ENCODE measurements at regions of chr6 and their contacts with region 1.

Region 1: GRCh38 chr6:143734641-143735063 is 56.9 kb downstream of the PHACTR2 start:
- DNase-seq: no peak
- H3K4me3 Mint-ChIP-seq: no peak overlapping the region
- H3K27ac Mint-ChIP-seq: no peak overlapping the region
- H3K4me1 Mint-ChIP-seq: peaks cover 33% of the 10 kb centered on the region
- H3K27me3 Mint-ChIP-seq: no peaks in the 10 kb centered on the region

Region 2: GRCh38 chr6:143615785-143616184 is 118.9 kb before region 1 on chr6:
- intact Hi-C with region 1: loop called (anchors 5 kb)
- DNase-seq: no peak
- H3K4me3 Mint-ChIP-seq: no peak overlapping the region
- H3K27ac Mint-ChIP-seq: no peak overlapping the region
- H3K4me1 Mint-ChIP-seq: peaks cover 33% of the 10 kb centered on the region
- H3K27me3 Mint-ChIP-seq: peaks cover 7% of the 10 kb centered on the region

Region 3: GRCh38 chr6:143652841-143653331 is 81.8 kb before region 1 on chr6:
- intact Hi-C with region 1: no loop called
- DNase-seq: no peak
- H3K4me3 Mint-ChIP-seq: no peak overlapping the region
- H3K27ac Mint-ChIP-seq: no peak overlapping the region
- H3K4me1 Mint-ChIP-seq: peaks cover 5% of the 10 kb centered on the region
- H3K27me3 Mint-ChIP-seq: no peaks in the 10 kb centered on the region

Region 4: GRCh38 chr6:143721642-143722041 is 13.0 kb before region 1 on chr6:
- intact Hi-C with region 1: no loop called
- DNase-seq: no peak
- H3K4me3 Mint-ChIP-seq: no peak overlapping the region
- H3K27ac Mint-ChIP-seq: no peak overlapping the region
- H3K4me1 Mint-ChIP-seq: peaks cover 6% of the 10 kb centered on the region
- H3K27me3 Mint-ChIP-seq: no peaks in the 10 kb centered on the region

Region 5: GRCh38 chr6:143859888-143860660 is 125.4 kb after region 1 on chr6:
- intact Hi-C with region 1: loop called (anchors 5 kb)
- DNase-seq: no peak
- H3K4me3 Mint-ChIP-seq: no peak overlapping the region
- H3K27ac Mint-ChIP-seq: no peak overlapping the region
- H3K4me1 Mint-ChIP-seq: peaks cover 23% of the 10 kb centered on the region
- H3K27me3 Mint-ChIP-seq: no peaks in the 10 kb centered on the region

Region 6: GRCh38 chr6:143961886-143962873 is 227.5 kb after region 1 on chr6:
- intact Hi-C with region 1: no loop called
- DNase-seq: no peak
- H3K4me3 Mint-ChIP-seq: no peak overlapping the region
- H3K27ac Mint-ChIP-seq: no peak overlapping the region
- H3K4me1 Mint-ChIP-seq: peaks cover 3% of the 10 kb centered on the region
- H3K27me3 Mint-ChIP-seq: no peaks in the 10 kb centered on the region

Region 7: GRCh38 chr6:144063744-144064401 is 329.2 kb after region 1 on chr6:
- intact Hi-C with region 1: loop called (anchors 10 kb)
- DNase-seq: peak; percentile 89
- H3K4me3 Mint-ChIP-seq: peak overlapping the region; percentile 87
- H3K27ac Mint-ChIP-seq: peak overlapping the region; percentile 89
- H3K4me1 Mint-ChIP-seq: peaks cover 43% of the 10 kb centered on the region
- H3K27me3 Mint-ChIP-seq: no peaks in the 10 kb centered on the region

Region 8: DNA sequence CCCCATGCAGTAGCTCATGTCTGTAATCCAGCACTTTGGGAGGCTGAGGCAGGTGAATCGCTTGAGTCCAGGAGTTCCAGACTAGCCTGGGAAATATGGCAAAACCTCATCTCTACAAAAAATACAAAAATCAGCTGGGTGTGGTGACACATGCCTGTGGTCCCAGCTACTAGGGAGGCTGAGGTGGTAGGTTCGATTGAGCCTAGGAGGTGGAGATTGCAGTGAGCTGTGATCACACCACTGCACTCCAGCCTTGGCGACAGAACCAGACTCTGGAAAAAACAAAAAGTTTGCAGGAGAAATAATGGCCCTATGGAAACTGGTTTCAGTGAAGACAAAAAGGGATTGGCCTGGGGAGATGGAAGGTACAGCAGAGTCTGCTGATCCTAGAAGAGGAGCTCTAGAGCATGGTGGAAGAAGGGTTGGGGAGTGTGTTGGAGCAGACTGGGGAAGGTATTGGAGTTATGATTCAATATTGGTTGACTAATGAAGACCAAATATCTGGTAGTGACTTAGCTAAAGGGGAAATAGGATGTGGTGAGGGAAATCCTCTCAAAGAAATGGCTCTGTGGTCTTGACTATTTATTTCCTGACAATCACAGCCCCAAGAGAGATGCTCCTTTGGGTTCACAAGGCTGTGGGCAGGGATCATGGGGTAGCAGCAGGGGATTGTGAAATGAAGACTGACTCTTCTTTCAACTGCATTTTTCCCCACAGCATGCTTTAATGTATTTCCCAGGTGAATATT is 832.4 kb after region 1 on chr6:
- intact Hi-C with region 1: no loop called
- DNase-seq: no peak
- H3K4me3 Mint-ChIP-seq: no peak overlapping the region
- H3K27ac Mint-ChIP-seq: no peak overlapping the region
- H3K4me1 Mint-ChIP-seq: peaks cover 5% of the 10 kb centered on the region
- H3K27me3 Mint-ChIP-seq: no peaks in the 10 kb centered on the region